Mammary epithelial cell (primary cell): ENCODE measurements at regions of chr15 and their contacts with region 1.

Region 1: GRCh38 chr15:63573533-63573932 is 23.7 kb upstream of the FBXL22 start:
- DNase-seq: no peak
- H3K4me3 ChIP-seq: no peak overlapping the region
- H3K27ac ChIP-seq: no peak overlapping the region
- H3K4me1 ChIP-seq: no peaks in the 10 kb centered on the region
- H3K27me3 ChIP-seq: no peaks in the 10 kb centered on the region
- CTCF ChIP-seq: no peak

Region 2: DNA sequence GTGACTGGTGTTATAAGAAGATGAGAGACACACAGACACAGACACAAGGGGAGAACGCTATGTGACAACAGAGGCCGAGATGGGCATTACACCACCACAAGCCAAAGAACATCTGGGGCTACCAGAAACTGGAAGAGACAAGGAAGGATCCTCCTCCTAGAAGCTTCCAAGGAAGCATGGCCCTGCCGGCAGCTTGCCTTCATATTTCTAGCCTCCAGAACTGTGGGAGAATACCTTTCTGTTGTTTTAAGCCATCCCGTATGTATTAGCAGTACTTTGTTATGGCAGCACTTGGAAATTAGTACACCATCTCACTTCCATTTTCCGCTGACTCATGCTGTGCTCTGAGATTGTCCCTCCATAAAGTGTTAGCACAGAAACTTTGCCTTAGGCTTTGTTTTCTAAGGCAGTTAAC is 153.2 kb before region 1 on chr15:
- CTCF ChIA-PET with region 1: interaction called, 21 read pairs
- dilution Hi-C with region 1: no loop called
- in situ Hi-C with region 1: no loop called
- intact Hi-C with region 1: no loop called
- DNase-seq: peak; percentile 33
- H3K4me3 ChIP-seq: no peak overlapping the region
- H3K27ac ChIP-seq: no peak overlapping the region
- H3K4me1 ChIP-seq: peaks cover 3% of the 10 kb centered on the region
- H3K27me3 ChIP-seq: no peaks in the 10 kb centered on the region
- CTCF ChIP-seq: no peak

Region 3: GRCh38 chr15:63587527-63587926 is 14.0 kb after region 1 on chr15:
- CTCF ChIA-PET with region 1: no interaction called
- dilution Hi-C with region 1: no loop called
- in situ Hi-C with region 1: no loop called
- intact Hi-C with region 1: no loop called
- DNase-seq: no peak
- H3K4me3 ChIP-seq: no peak overlapping the region
- H3K27ac ChIP-seq: no peak overlapping the region
- H3K4me1 ChIP-seq: no peaks in the 10 kb centered on the region
- H3K27me3 ChIP-seq: no peaks in the 10 kb centered on the region
- CTCF ChIP-seq: no peak